Activated B cell treated with CpG ODN at 0.5 μM for 24 hours (primary cell): ENCODE measurements at regions of chr12 and their contacts with region 1.

Region 1: GRCh38 chr12:104569346-104570173 is 112.8 kb downstream of the CHST11 start:
- DNase-seq: peak; percentile 37
- ATAC-seq: peak; percentile 75
- H3K4me3 Mint-ChIP-seq: peak overlapping the region; percentile 55
- H3K27ac Mint-ChIP-seq: peak overlapping the region; percentile 82
- H3K4me1 Mint-ChIP-seq: peaks cover 73% of the 10 kb centered on the region
- H3K27me3 Mint-ChIP-seq: no peaks in the 10 kb centered on the region
- CTCF ChIP-seq: no peak

Region 2: DNA sequence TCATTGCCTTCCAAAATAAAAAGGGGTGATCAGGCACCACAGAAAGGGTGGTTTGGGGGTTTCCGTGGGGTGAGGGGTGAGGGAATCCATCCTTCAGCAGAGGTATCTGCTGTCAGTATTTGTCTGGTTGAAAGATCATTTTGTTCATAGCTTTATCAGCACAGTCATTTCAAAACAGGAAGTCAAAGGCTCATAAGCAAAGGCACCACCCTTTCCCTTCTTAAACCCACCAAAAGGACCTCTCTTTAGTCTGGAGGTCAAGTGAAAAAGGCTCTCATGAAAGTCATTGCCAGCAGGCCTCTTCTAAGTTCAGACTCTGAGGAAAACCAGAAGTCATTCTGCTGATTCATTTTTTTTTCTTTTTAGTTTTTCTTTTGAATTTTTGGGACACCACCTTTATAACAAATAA is 106.6 kb before region 1 on chr12:
- CTCF ChIA-PET with region 1: interaction called, 4 read pairs
- POLR2A ChIA-PET with region 1: interaction called, 75 read pairs
- intact Hi-C with region 1: loop called (anchors 1 kb)
- DNase-seq: no peak
- ATAC-seq: peak; percentile 61
- H3K4me3 Mint-ChIP-seq: peak overlapping the region; percentile 67
- H3K27ac Mint-ChIP-seq: peak overlapping the region; percentile 91
- H3K4me1 Mint-ChIP-seq: peaks cover 88% of the 10 kb centered on the region
- H3K27me3 Mint-ChIP-seq: no peaks in the 10 kb centered on the region
- CTCF ChIP-seq: no peak

Region 3: DNA sequence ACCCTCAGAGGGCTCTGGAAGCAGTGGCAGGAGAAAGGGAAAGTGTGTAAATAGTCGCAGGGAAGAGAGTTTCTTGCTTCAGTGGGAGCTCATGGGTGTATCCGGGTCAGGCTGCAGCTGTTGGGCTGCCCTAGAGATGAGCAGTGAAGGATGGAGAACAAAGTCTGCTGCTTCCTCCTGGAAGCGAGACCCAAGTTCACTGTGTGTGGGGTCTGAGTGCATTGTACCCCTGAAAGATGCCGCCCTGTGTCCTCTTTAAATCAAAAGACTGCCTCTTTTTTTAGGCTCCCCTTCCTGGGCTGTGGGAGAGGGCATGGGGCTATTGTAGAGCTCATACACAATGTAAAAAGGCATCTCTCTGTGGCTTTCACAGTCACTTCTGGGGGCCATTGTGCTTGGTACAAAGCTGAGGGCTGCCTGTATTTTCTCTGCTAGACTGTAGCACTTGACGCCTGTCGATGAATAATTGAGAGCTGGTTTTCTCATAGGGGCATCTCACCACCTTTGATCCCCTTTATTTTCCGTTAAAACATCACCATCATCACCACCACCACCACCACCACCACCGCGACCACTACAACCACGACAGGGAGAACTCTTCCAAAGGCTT is 96.1 kb before region 1 on chr12:
- CTCF ChIA-PET with region 1: interaction called, 3 read pairs
- POLR2A ChIA-PET with region 1: interaction called, 11 read pairs
- intact Hi-C with region 1: no loop called
- DNase-seq: no peak
- ATAC-seq: peak; percentile 84
- H3K4me3 Mint-ChIP-seq: peak overlapping the region; percentile 81
- H3K27ac Mint-ChIP-seq: peak overlapping the region; percentile 94
- H3K4me1 Mint-ChIP-seq: peaks cover 87% of the 10 kb centered on the region
- H3K27me3 Mint-ChIP-seq: no peaks in the 10 kb centered on the region
- CTCF ChIP-seq: no peak

Region 4: GRCh38 chr12:104536841-104537240 is 32.7 kb before region 1 on chr12:
- CTCF ChIA-PET with region 1: interaction called, 4 read pairs
- POLR2A ChIA-PET with region 1: interaction called, 6 read pairs
- intact Hi-C with region 1: loop called (anchors 2 kb)
- DNase-seq: no peak
- ATAC-seq: peak; percentile 82
- H3K4me3 Mint-ChIP-seq: no peak overlapping the region
- H3K27ac Mint-ChIP-seq: no peak overlapping the region
- H3K4me1 Mint-ChIP-seq: peaks cover 89% of the 10 kb centered on the region
- H3K27me3 Mint-ChIP-seq: no peaks in the 10 kb centered on the region
- CTCF ChIP-seq: no peak

Region 5: GRCh38 chr12:104549815-104550480 is 19.6 kb before region 1 on chr12:
- CTCF ChIA-PET with region 1: interaction called, 3 read pairs
- POLR2A ChIA-PET with region 1: interaction called, 6 read pairs
- intact Hi-C with region 1: loop called (anchors 2 kb)
- DNase-seq: no peak
- ATAC-seq: no peak
- H3K4me3 Mint-ChIP-seq: no peak overlapping the region
- H3K27ac Mint-ChIP-seq: no peak overlapping the region
- H3K4me1 Mint-ChIP-seq: peaks cover 82% of the 10 kb centered on the region
- H3K27me3 Mint-ChIP-seq: no peaks in the 10 kb centered on the region
- CTCF ChIP-seq: no peak

Region 6: DNA sequence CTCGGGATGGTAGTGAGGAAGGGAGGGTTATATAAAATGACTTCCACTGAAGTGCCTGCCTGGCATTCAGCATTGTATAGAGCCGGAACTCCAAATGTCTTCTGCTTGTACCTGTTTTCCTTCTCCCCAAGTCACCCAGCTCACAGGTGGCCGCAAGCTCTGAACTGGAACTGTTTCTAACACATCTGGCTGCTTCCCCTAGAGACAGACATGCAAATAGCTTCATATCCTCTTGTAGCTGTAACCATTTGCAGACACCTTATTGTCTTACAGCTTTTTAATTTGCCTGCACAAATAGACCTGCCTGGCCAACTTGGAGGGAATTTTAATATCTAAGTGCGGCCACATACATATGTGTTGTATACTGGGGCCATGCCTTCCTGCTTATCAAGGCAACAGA is 13.2 kb after region 1 on chr12:
- CTCF ChIA-PET with region 1: interaction called, 6 read pairs
- POLR2A ChIA-PET with region 1: interaction called, 36 read pairs
- intact Hi-C with region 1: loop called (anchors 1 kb)
- DNase-seq: peak; percentile 26
- ATAC-seq: peak; percentile 86
- H3K4me3 Mint-ChIP-seq: peak overlapping the region; percentile 56
- H3K27ac Mint-ChIP-seq: peak overlapping the region; percentile 70
- H3K4me1 Mint-ChIP-seq: peaks cover 89% of the 10 kb centered on the region
- H3K27me3 Mint-ChIP-seq: no peaks in the 10 kb centered on the region
- CTCF ChIP-seq: no peak

Region 7: GRCh38 chr12:104604070-104604994 is 34.8 kb after region 1 on chr12:
- CTCF ChIA-PET with region 1: no interaction called
- POLR2A ChIA-PET with region 1: no interaction called
- intact Hi-C with region 1: loop called (anchors 2 kb)
- DNase-seq: no peak
- ATAC-seq: peak; percentile 77
- H3K4me3 Mint-ChIP-seq: peak overlapping the region; percentile 11
- H3K27ac Mint-ChIP-seq: peak overlapping the region; percentile 72
- H3K4me1 Mint-ChIP-seq: peaks cover 72% of the 10 kb centered on the region
- H3K27me3 Mint-ChIP-seq: no peaks in the 10 kb centered on the region
- CTCF ChIP-seq: no peak

Region 8: GRCh38 chr12:104615048-104615561 is 45.5 kb after region 1 on chr12:
- CTCF ChIA-PET with region 1: no interaction called
- POLR2A ChIA-PET with region 1: no interaction called
- intact Hi-C with region 1: no loop called
- DNase-seq: no peak
- ATAC-seq: no peak
- H3K4me3 Mint-ChIP-seq: no peak overlapping the region
- H3K27ac Mint-ChIP-seq: peak overlapping the region; percentile 22
- H3K4me1 Mint-ChIP-seq: peaks cover 34% of the 10 kb centered on the region
- H3K27me3 Mint-ChIP-seq: no peaks in the 10 kb centered on the region
- CTCF ChIP-seq: no peak